Pancreas (tissue), 10 donors: ENCODE measurements at regions of chr15 and their contacts with region 1.

Region 1: GRCh38 chr15:98525661-98526001 is 122.7 kb upstream of the IGF1R start:
- DNase-seq: no peak
- ATAC-seq: no peak
- H3K4me3 ChIP-seq: no peak overlapping the region
- H3K27ac ChIP-seq: no peak overlapping the region
- H3K4me1 ChIP-seq: peaks cover 0 to 8% (median 0%) of the 10 kb centered on the region in 3 donors
- H3K27me3 ChIP-seq: no peaks in the 10 kb centered on the region
- CTCF ChIP-seq: no peak

Region 2: GRCh38 chr15:98658831-98659699 is 133.4 kb after region 1 on chr15:
- intact Hi-C with region 1: loop called in 2 of 3 experiments (anchors 5 to 10 kb)
- DNase-seq: peak in 3 of 6 donors; percentile 33 to 54 (median 44)
- ATAC-seq: peak; percentile 88 to 94 (median 90)
- H3K4me3 ChIP-seq: no peak overlapping the region
- H3K27ac ChIP-seq: no peak overlapping the region
- H3K4me1 ChIP-seq: peaks cover 0 to 17% (median 8%) of the 10 kb centered on the region in 3 donors
- H3K27me3 ChIP-seq: no peaks in the 10 kb centered on the region
- CTCF ChIP-seq: peak; percentile 34 to 73 (median 65)

Region 3: GRCh38 chr15:98865397-98866339 is 340.0 kb after region 1 on chr15:
- intact Hi-C with region 1: loop called in 1 of 3 experiments (anchors 10 kb)
- DNase-seq: peak; percentile 63 to 89 (median 78)
- ATAC-seq: peak; percentile 90 to 93 (median 93)
- H3K4me3 ChIP-seq: peak overlapping the region in 3 of 4 donors; percentile 11 to 47 (median 28)
- H3K27ac ChIP-seq: peak overlapping the region in 2 of 4 donors; percentile 53 to 64
- H3K4me1 ChIP-seq: peaks cover 0 to 5% (median 5%) of the 10 kb centered on the region in 3 donors
- H3K27me3 ChIP-seq: no peaks in the 10 kb centered on the region
- CTCF ChIP-seq: no peak